H1 (cell line): ENCODE measurements at regions of chr15 and their contacts with region 1.

Region 1: DNA sequence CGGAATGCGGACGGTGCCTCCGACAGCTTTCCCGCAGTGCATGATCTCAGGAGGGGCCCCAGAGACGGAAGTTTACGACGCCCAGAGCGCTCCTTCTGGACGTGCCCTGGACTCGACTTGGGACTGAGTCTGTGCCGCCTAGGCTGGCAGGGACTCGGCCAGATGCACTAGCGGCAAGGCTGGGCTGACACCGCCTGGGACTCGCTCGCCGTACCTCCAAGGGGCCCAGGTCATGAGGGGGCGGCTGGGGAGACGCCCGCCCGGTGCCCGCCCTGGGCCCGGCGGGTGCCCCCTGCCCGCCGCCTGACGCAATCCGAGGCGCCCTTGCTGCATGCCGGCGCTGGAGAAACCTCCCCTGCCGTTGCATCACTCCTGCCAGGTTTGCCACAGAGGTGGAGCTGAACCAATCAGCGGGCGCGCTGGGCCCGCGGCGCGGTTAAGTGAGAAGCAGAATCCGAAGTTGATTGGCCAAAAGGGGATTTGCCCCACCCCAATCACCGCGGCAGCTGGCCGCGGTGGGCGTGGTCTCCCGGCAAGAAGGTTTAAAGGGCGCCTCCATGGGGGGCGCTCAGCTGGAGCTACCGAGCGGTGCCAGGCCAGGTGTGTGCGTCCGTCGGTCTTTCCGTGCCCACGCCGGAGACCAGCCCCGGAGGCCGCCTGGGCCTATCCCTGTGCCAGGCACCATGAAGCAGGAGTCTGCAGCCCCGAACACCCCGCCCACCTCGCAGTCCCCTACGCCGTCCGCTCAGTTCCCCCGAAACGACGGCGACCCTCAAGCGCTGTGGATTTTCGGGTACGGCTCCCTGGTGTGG is at the start of gene CHAC1:
- DNase-seq: peak; percentile 96 to 97
- H3K4me3 ChIP-seq: peak within 1 kb of the TSS; percentile 74 to 92 (median 82)
- H3K27ac ChIP-seq: peak within 1 kb of the TSS; percentile 97
- H3K4me1 ChIP-seq: peaks cover 2 to 20% (median 12%) of the 10 kb centered on the region in 4 experiments
- H3K27me3 ChIP-seq: no peaks in the 10 kb centered on the region
- CTCF ChIP-seq: peak in 1 of 3 experiments; percentile 0; a peak in 1 of 4 replicates
- EP300 ChIP-seq: peak in 1 of 2 experiments; percentile 50; a peak in 1 of 3 replicates
- POLR2A ChIP-seq: peak; percentile 76 to 85
- RAD21 ChIP-seq: peak in 1 of 2 experiments; percentile 10; a peak in 1 of 4 replicates
- total RNA-seq, gene CHAC1: 28.7 and 34.3 TPM in 2 replicates

Region 2: GRCh38 chr15:40857601-40858341 is 95.3 kb before region 1 on chr15:
- CTCF ChIA-PET with region 1: interaction called, 3 read pairs
- POLR2A ChIA-PET with region 1: interaction called, 13 read pairs
- DNase-seq: peak in 1 of 2 experiments; percentile 99
- H3K4me3 ChIP-seq: no peak overlapping the region
- H3K27ac ChIP-seq: no peak overlapping the region
- H3K4me1 ChIP-seq: peaks cover 0 to 3% (median 0%) of the 10 kb centered on the region in 4 experiments; a peak in 1 of 7 replicates
- H3K27me3 ChIP-seq: no peaks in the 10 kb centered on the region
- CTCF ChIP-seq: peak; percentile 95 to 99 (median 99)
- EP300 ChIP-seq: peak in 1 of 2 experiments; percentile 19; a peak in 1 of 3 replicates
- POLR2A ChIP-seq: no peak; a peak in 1 of 3 replicates
- RAD21 ChIP-seq: peak; percentile 73 to 82

Region 3: DNA sequence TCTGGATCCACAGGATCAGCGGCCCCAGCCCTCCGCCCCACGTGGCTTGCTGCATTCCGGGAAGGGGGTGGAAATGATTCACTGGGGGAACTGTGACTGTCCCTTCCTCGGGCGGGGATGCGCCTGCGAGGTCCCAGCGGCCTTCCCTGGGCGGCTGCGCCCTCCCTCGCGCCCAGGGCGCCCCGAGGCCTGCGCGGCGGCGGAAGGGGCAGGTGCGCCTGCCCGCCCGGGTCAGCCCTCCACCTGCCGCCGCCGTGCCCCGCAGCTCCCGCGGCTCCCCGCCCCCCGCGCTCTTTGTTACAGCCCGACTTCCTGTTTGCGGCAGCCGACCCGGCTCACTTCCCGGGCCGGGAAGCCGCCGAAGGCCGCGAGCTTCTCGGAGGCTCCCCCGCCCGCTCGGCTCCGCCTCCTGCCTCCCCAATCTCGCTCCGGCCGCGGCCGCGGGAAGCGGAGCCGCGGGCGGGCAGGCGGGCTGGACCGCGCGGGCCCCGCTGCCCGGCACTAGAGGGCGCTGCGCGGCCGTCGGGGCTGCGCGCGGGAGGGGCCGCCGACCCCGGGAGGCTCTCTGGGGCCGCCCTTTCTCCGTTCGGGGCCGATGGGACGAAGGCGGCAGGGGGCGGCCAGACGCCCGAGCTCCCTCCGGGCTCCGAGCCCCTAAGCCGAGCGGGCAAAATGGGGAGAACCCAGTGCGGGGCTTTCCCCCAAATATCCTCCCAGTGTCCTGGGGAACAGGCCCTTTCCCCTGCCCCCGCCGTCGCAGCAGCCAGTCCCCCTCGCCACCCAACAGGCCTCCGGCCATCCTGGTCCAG is 11.4 kb before region 1 on chr15:
- CTCF ChIA-PET with region 1: interaction called, 60 read pairs
- POLR2A ChIA-PET with region 1: interaction called, 1,505 read pairs
- DNase-seq: peak in 1 of 2 experiments; percentile 90
- H3K4me3 ChIP-seq: peak overlapping the region; percentile 30 to 64 (median 52)
- H3K27ac ChIP-seq: peak overlapping the region; percentile 58; the same call in 1 of the 2 replicates
- H3K4me1 ChIP-seq: peaks cover 0 to 28% (median 12%) of the 10 kb centered on the region in 4 experiments; a peak in 6 of 7 replicates
- H3K27me3 ChIP-seq: peaks cover 0 to 25% (median 16%) of the 10 kb centered on the region in 4 experiments; a peak in 6 of 7 replicates
- CTCF ChIP-seq: peak; percentile 71 to 80 (median 76)
- EP300 ChIP-seq: 0 out of 3 replicates have a peak, but pooled peaks of 1 of the 2 experiments have one; percentile 23
- POLR2A ChIP-seq: no peak
- RAD21 ChIP-seq: peak; percentile 36 to 71; a peak in 3 of 4 replicates

Region 4: DNA sequence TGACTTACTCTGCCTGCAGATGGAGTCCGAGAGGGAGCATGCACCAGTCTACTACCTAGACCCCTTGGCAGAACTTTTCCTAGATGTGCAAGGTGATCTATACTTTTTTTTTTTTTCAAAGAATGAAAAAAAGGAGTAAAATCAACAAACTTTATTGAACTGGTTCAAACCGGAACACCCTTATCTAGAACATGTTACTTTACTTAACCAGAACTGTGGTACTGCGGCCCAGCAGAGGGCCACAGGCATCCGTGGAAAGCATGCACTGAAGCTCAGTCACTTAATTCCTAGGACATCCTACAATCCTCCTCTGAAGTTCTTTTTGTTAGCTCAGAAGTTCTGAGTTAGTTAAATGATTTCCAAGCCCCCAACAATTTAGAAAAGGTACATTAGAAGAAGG is 21.8 kb after region 1 on chr15:
- CTCF ChIA-PET with region 1: interaction called, 9 read pairs
- POLR2A ChIA-PET with region 1: interaction called, 57 read pairs
- DNase-seq: no peak
- H3K4me3 ChIP-seq: no peak overlapping the region
- H3K27ac ChIP-seq: no peak overlapping the region
- H3K4me1 ChIP-seq: peaks cover 0 to 2% (median 0%) of the 10 kb centered on the region in 4 experiments; a peak in 1 of 7 replicates
- H3K27me3 ChIP-seq: no peaks in the 10 kb centered on the region
- CTCF ChIP-seq: no peak
- EP300 ChIP-seq: no peak
- POLR2A ChIP-seq: no peak
- RAD21 ChIP-seq: no peak; a peak in 1 of 4 replicates